ENCODE measurements at regions of chr6 and their contacts with region 1.

Region 1: DNA sequence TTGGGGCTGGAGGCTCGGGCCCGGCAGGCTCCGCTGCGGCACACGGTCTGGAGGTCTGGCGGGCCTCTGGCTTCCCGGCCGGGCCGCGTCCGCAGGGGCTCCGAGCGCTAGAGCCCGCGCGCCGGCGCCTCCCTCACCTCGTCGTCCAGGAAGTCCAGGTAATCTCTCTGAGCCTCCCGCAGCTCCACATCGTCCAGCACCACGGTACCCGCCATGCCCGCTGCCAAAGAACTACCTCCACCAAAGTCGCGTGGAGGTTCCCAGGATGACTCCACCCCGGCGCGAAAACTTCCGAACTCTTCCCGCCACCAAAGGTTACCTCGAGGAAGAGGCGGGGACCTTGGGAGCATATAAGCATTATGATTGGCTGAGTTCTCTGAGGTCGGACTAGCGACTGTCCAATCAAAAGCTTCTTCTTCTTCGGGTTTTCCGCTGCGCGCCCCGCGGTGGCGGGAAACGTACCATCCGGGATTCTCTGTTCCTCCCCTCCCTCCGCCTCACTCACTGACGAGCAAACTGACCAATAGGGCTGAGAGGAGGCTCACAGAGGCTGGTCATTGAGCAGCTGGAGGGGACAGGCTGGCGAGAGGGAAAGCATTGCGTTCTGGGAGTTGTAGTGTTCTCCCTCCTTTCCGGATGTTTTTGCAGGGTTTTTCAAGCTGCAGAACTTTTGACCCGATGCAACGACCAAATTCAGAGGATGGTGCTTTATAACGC is at the start of gene MCM3:
- DNase-seq: peak; percentile 99
- H3K4me3 Mint-ChIP-seq: no peak within 1 kb of the TSS
- H3K27ac Mint-ChIP-seq: peak within 1 kb of the TSS; percentile 61
- H3K4me1 Mint-ChIP-seq: peaks cover 50% of the 10 kb centered on the region
- H3K27me3 Mint-ChIP-seq: no peaks in the 10 kb centered on the region
- total RNA-seq, gene MCM3: 231 to 244 TPM

Region 2: DNA sequence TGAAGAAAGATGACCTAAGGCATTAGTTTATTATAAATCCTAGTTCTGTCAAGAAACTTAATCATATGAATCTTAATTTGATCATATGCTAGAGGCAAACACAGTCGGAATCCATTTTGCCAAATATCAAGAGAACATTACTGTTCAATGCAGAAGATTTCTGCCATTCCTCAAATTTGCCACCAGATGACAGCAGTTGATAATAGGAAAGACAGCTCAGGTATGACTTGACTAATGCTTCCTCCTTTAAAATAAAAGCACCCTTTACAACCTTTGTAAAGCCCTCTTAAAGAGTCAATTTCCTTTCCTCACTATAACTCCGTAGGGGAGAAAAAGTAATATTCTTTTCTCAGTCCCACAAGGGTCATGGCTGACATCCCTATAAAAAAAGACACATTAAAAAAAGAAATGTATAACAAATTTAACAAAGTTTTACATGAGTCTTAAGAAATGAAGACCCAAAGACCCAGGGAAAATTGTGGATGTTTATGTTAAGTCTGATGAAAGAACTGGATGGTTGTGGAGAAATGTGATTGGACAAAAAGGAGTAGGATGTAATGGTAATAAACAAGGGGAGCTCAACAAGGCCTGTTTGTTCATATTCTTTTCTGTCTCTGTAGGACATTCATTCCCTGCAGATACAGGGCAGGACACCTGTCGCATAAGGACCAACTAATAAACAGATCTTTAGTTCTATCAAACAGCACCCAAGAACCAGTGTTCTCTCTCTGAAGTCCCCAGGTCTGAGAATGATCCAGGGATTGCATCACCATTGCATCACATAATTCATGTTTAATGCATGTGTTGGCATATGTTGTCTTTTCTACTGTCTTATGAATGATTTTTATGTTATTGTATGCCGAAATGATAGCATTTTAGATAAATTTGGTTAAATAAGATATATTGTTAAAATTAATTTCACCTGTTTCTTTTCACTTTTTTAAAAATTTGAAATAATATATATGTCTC is 121.4 kb before region 1 on chr6:
- CTCF ChIA-PET with region 1: interaction called, 10 read pairs
- POLR2A ChIA-PET with region 1: no interaction called
- intact Hi-C with region 1: loop called (anchors 1 kb)
- DNase-seq: no peak
- H3K4me3 Mint-ChIP-seq: no peak overlapping the region
- H3K27ac Mint-ChIP-seq: peak overlapping the region; percentile 60
- H3K4me1 Mint-ChIP-seq: peaks cover 44% of the 10 kb centered on the region
- H3K27me3 Mint-ChIP-seq: peaks cover 30% of the 10 kb centered on the region

Region 3: DNA sequence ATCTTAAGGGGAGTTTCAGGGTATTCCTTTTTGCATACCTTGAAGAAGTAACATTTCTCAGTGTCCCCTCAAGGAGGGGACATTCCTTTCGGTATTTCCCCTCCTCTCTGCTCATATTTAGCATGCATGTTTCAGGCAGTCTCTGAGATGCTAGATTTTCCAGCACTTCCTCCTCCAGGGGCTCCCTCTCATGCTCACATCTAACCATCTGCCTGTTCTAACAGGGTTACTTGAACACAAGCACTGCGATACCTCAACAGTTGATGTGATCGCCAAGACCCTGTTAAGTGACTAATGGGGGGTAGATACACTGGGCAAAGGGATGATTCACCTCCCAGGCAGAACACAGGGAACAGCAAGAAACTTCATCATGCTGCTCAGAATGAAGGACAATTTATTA is 12.8 kb after region 1 on chr6:
- CTCF ChIA-PET with region 1: interaction called, 19 read pairs
- POLR2A ChIA-PET with region 1: interaction called, 13 read pairs
- intact Hi-C with region 1: loop called (anchors 1 kb)
- DNase-seq: peak; percentile 23
- H3K4me3 Mint-ChIP-seq: peak overlapping the region; percentile 64
- H3K27ac Mint-ChIP-seq: peak overlapping the region; percentile 88
- H3K4me1 Mint-ChIP-seq: peaks cover 41% of the 10 kb centered on the region
- H3K27me3 Mint-ChIP-seq: no peaks in the 10 kb centered on the region

Region 4: GRCh38 chr6:52377538-52378221 is 93.1 kb after region 1 on chr6:
- CTCF ChIA-PET with region 1: interaction called, 15 read pairs
- POLR2A ChIA-PET with region 1: no interaction called
- intact Hi-C with region 1: no loop called
- DNase-seq: no peak
- H3K4me3 Mint-ChIP-seq: no peak overlapping the region
- H3K27ac Mint-ChIP-seq: no peak overlapping the region
- H3K4me1 Mint-ChIP-seq: peaks cover 61% of the 10 kb centered on the region
- H3K27me3 Mint-ChIP-seq: no peaks in the 10 kb centered on the region

Region 5: DNA sequence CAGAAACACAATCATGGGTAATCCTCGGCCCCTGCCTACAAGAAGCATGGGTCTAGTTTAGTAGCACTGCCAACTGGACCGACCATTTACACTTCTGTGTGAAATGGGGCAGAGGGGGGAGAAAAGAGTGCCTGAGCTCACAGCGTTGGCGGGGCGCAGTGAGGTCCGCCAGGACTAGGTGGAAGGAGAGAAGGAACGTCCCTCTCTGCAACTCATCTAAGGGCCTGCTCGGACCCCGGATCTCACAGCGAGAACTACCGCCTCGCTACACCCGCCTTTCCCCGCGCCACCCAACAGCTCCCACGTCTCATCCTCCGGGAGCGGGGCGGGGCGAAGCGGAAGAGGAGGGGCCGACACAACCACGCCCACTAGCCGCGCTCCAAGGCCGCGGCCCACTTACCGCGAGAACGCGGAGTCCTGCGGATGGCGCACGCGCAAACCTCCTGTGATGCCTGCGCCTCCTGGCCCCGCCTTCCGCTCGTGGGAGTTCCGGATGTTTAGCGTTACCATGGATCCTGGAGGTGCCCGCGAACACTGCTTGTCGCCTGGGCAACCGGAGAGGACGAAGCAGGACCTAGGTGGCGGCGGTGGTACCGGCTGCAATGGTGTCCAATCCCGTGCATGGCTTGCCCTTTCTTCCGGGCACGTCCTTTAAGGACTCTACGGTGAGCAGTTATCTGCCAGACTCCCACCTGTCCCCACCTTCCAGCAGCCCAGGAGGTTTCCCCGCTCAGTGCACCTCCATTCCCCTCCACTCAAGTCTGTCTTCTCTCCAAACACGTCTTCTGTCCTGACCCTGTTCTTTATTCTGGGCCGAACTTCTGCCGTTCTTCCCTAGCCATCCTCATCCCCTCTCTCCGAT is 135.4 kb after region 1 on chr6 and contains the start of gene EFHC1:
- CTCF ChIA-PET with region 1: interaction called, 21 read pairs
- POLR2A ChIA-PET with region 1: interaction called, 4 read pairs
- intact Hi-C with region 1: loop called (anchors 1 kb)
- DNase-seq: peak; percentile 99
- H3K4me3 Mint-ChIP-seq: no peak within 1 kb of the TSS
- H3K27ac Mint-ChIP-seq: no peak within 1 kb of the TSS
- H3K4me1 Mint-ChIP-seq: peaks cover 16% of the 10 kb centered on the region
- H3K27me3 Mint-ChIP-seq: no peaks in the 10 kb centered on the region
- total RNA-seq, gene EFHC1: 1.9 to 3.1 TPM

Region 6: DNA sequence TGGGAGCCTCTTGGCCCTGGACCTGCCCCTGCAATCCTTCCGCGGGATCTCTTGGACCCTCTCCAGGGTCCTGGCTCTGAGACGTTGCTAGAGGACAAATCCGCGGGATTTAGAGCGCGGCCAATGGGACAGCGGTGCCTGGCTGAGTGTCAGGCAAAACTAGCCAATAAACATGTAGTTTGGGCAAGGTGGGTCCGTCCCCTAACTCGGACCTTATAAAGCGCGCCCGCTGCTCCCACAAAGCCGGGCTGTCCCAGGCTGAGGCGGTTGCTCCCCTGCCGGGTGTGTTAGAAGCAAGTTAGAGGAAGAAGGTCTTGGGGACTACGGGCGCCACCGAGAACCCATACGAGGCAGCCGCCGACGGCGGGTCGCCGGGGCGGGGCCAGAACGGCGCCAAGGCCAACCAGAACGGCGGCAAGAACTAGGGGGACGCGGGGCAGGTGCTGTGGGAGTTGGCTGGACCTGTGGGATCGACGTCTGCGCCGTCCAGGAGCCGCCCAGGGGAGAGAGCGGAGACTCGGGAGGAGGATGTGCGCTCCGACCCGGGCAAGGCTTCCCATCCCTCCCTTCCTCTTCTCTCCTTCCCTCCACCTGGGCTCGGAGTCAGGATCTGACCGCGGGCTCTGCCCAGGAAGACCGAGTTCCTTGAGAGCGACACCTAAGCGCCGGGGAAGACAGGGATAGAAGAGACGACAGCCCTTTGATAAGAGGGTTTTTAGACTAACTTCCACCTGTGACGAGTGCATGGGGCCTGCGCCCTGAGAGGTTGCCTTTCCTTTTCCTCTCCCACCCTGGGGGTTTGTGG is 379.8 kb after region 1 on chr6:
- CTCF ChIA-PET with region 1: interaction called, 14 read pairs
- POLR2A ChIA-PET with region 1: no interaction called
- intact Hi-C with region 1: loop called (anchors 1 kb)
- DNase-seq: peak; percentile 84
- H3K4me3 Mint-ChIP-seq: no peak overlapping the region
- H3K27ac Mint-ChIP-seq: no peak overlapping the region
- H3K4me1 Mint-ChIP-seq: peaks cover 8% of the 10 kb centered on the region
- H3K27me3 Mint-ChIP-seq: no peaks in the 10 kb centered on the region

Measured in activated CD4-positive, alpha-beta memory T cell treated with anti-CD3 and anti-CD28 coated beads for 36 hours (primary cell).